ENCODE measurements at regions of chr16 and their contacts with region 1.

Region 1: DNA sequence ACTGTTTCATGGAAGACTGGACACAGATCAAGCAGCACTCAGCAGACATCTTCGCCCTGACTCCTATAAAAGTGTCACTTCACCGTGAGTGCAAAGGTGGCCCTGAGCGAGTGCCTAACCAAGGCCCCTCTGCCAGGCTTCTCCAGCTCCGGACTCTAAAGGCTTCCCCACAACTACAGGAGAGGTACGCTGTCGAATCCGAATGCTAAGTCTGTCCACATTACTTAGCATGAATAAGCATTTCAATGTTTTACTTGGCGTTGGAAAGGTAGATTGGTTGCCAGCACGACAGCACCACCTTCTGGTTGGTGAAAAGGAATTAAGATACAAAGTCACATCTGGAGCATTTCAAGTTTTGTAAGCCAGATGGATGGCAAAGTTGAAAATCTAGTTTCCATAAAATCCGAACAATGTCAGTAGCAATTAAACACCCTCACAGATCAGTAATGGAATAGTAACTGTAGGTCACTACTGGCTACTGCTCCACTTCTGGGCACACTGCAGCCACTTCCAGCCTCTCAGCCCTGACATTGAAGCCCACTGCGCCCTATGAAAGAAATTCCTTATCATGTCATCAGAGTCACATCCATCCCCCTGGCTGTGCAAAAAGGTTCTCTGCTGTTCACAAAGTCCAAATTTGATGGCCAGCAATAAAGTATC is 100.9 kb downstream of the PARN start:
- DNase-seq: peak; percentile 94
- ATAC-seq: peak; percentile 85
- H3K4me3 ChIP-seq: peak overlapping the region in 1 of 3 experiments; percentile 10; a peak in 1 of 6 replicates
- H3K27ac ChIP-seq: peak overlapping the region; percentile 48
- H3K4me1 ChIP-seq: peaks cover 53% of the 10 kb centered on the region
- H3K27me3 ChIP-seq: no peaks in the 10 kb centered on the region
- CTCF ChIP-seq: peak; percentile 98
- EP300 ChIP-seq: peak in 1 of 2 experiments; percentile 56; a peak in 2 of 4 replicates
- POLR2A ChIP-seq: no peak
- RAD21 ChIP-seq: peak; percentile 99

Region 2: DNA sequence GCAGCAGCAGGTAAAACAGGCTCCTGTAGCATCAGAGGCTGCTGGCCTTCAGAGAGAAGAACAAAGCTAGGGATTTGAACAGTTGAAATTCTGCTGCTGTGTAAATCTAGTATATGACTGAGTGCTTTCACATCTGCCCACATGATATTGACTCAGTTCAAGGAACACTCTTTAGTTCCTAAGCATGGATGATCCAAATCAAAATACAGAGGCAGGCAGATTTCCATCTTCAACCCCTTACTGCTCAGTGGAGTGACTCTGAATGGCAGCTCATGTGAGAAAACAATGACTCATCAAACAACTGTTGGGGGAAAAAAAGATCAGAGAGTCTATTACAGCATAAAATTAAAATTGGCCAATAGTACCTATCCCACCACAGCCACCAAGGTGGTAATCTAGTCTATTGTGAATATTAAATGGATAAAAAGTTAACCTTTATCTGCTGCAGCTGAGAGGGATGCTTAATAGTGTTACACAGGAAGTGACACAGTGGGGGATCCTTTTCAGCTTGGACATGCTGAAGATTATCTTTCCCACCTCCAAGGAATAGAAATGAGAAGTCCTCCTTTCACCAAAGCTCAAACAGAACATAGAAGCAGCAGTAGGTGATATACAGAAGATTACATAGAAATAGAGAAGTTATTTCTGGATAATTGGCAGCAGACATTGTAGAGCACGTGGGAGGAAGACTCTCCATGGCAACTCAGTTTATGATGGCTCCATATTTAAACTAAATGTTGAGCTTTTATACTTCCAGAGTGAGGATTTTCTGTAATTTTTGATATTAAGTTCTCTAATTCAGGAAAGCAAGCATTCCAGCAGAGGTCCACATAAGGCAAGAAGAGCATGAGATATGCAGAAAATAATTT is 848.9 kb before region 1 on chr16:
- CTCF ChIA-PET with region 1: no interaction called
- POLR2A ChIA-PET with region 1: no interaction called
- in situ Hi-C with region 1: no loop called
- intact Hi-C with region 1: no loop called
- DNase-seq: no peak
- ATAC-seq: no peak
- H3K4me3 ChIP-seq: no peak overlapping the region
- H3K27ac ChIP-seq: no peak overlapping the region
- H3K4me1 ChIP-seq: no peaks in the 10 kb centered on the region
- H3K27me3 ChIP-seq: no peaks in the 10 kb centered on the region
- CTCF ChIP-seq: no peak
- EP300 ChIP-seq: no peak
- POLR2A ChIP-seq: no peak
- RAD21 ChIP-seq: no peak

Region 3: GRCh38 chr16:13919683-13920509 is 609.2 kb before region 1 on chr16 and contains the start of gene ERCC4:
- CTCF ChIA-PET with region 1: no interaction called
- POLR2A ChIA-PET with region 1: no interaction called
- in situ Hi-C with region 1: no loop called
- intact Hi-C with region 1: loop called (anchors 5 kb)
- DNase-seq: peak; percentile 100
- ATAC-seq: peak; percentile 99
- H3K4me3 ChIP-seq: peak within 1 kb of the TSS; percentile 89 to 98 (median 98)
- H3K27ac ChIP-seq: peak within 1 kb of the TSS; percentile 49
- H3K4me1 ChIP-seq: peaks cover 38% of the 10 kb centered on the region
- H3K27me3 ChIP-seq: no peaks in the 10 kb centered on the region; a peak in 1 of 5 replicates
- CTCF ChIP-seq: peak; percentile 91
- EP300 ChIP-seq: no peak
- POLR2A ChIP-seq: peak; percentile 92 to 97
- RAD21 ChIP-seq: peak; percentile 48
- total RNA-seq, gene ERCC4: 15.2 and 27.9 TPM in 2 replicates

Region 4: GRCh38 chr16:14111713-14112540 is 417.2 kb before region 1 on chr16:
- CTCF ChIA-PET with region 1: no interaction called
- POLR2A ChIA-PET with region 1: no interaction called
- in situ Hi-C with region 1: no loop called
- intact Hi-C with region 1: no loop called
- DNase-seq: peak; percentile 58
- ATAC-seq: peak; percentile 90
- H3K4me3 ChIP-seq: no peak overlapping the region; a peak in 1 of 6 replicates
- H3K27ac ChIP-seq: peak overlapping the region; percentile 53
- H3K4me1 ChIP-seq: peaks cover 52% of the 10 kb centered on the region
- H3K27me3 ChIP-seq: no peaks in the 10 kb centered on the region
- CTCF ChIP-seq: no peak
- EP300 ChIP-seq: no peak
- POLR2A ChIP-seq: no peak
- RAD21 ChIP-seq: no peak

Region 5: DNA sequence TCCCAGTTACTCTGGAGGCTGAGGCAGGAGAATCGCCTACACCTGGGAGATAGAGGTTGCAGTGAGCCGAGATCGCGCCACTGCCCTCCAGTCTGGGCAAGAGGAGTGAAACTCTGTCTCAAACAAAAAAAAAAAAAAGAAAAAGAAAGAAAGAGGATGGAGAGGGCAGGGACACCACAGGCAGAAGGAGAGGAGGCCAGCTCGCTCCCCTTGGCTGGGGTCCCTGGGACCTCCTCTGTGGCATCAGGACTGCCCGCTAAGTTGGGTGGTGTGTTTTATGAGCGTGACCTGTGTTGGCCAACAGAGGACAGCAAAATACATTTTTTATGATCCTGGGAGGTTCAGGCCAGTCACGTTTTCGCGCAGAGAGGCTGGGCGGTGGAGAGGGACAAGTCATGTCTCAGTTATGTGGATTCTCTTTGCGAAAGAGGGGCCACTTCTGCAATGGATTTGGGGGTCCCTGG is 228.4 kb before region 1 on chr16:
- CTCF ChIA-PET with region 1: interaction called, 31 read pairs
- POLR2A ChIA-PET with region 1: interaction called, 3 read pairs
- in situ Hi-C with region 1: loop called (anchors 5 kb)
- intact Hi-C with region 1: loop called (anchors 1 kb)
- DNase-seq: peak; percentile 88
- ATAC-seq: peak; percentile 65
- H3K4me3 ChIP-seq: peak overlapping the region; percentile 70 to 90 (median 77)
- H3K27ac ChIP-seq: no peak overlapping the region
- H3K4me1 ChIP-seq: peaks cover 48% of the 10 kb centered on the region
- H3K27me3 ChIP-seq: peaks cover 0 to 4% of the 10 kb centered on the region in 2 experiments; a peak in 3 of 5 replicates
- CTCF ChIP-seq: peak; percentile 97
- EP300 ChIP-seq: 0 out of 4 replicates have a peak, but pooled peaks of 1 of the 2 experiments have one; percentile 39
- POLR2A ChIP-seq: 0 out of 4 replicates have a peak, but pooled peaks of 1 of the 2 experiments have one; percentile 19
- RAD21 ChIP-seq: peak; percentile 85

Region 6: GRCh38 chr16:14378131-14378551 is 151.0 kb before region 1 on chr16:
- CTCF ChIA-PET with region 1: no interaction called
- POLR2A ChIA-PET with region 1: no interaction called
- in situ Hi-C with region 1: no loop called
- intact Hi-C with region 1: loop called (anchors 5 kb)
- DNase-seq: peak; percentile 52
- ATAC-seq: peak; percentile 51
- H3K4me3 ChIP-seq: 0 out of 6 replicates have a peak overlapping the region, but pooled peaks of 1 of the 3 experiments have one; percentile 25
- H3K27ac ChIP-seq: no peak overlapping the region
- H3K4me1 ChIP-seq: peaks cover 59% of the 10 kb centered on the region
- H3K27me3 ChIP-seq: no peaks in the 10 kb centered on the region
- CTCF ChIP-seq: no peak
- EP300 ChIP-seq: no peak
- POLR2A ChIP-seq: no peak
- RAD21 ChIP-seq: no peak

Region 7: GRCh38 chr16:14475370-14476139 is 53.6 kb before region 1 on chr16:
- CTCF ChIA-PET with region 1: no interaction called
- POLR2A ChIA-PET with region 1: interaction called, 3 read pairs
- in situ Hi-C with region 1: no loop called
- intact Hi-C with region 1: loop called (anchors 1 kb)
- DNase-seq: peak; percentile 91
- ATAC-seq: peak; percentile 99
- H3K4me3 ChIP-seq: no peak overlapping the region; a peak in 1 of 6 replicates
- H3K27ac ChIP-seq: peak overlapping the region; percentile 58
- H3K4me1 ChIP-seq: peaks cover 51% of the 10 kb centered on the region
- H3K27me3 ChIP-seq: no peaks in the 10 kb centered on the region
- CTCF ChIP-seq: no peak
- EP300 ChIP-seq: peak in 1 of 2 experiments; percentile 39; a peak in 1 of 4 replicates
- POLR2A ChIP-seq: peak in 1 of 2 experiments; percentile 31; a peak in 1 of 4 replicates
- RAD21 ChIP-seq: peak; percentile 21; the same call in 1 of the 2 replicates

Measured in HepG2 (cell line).